ENCODE measurements at regions of chr1 and their contacts with region 1.

Region 1: DNA sequence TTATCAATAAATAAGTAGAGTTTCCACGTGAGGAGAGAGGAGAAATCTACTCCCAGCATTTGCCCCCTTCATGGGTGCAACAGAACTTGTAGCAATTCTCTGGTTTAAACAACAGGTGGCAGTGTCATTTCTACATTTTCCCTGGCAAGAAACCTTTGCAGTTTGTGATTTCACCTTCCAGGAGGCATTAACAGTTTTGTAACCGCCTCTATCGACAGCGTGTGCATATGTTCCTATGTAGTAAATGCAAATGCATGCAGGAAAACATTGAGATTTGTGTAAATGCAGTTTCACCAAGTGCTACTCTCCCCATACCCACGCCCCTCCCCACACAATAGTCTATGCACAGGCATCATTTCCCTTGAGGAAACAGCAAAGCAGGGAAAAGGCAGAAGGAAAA is 494.7 kb downstream of the SMYD3 start:
- DNase-seq: no peak

Region 2: GRCh38 chr1:245428681-245429080 is 583.7 kb before region 1 on chr1:
- intact Hi-C with region 1: no loop called
- DNase-seq: no peak

Region 3: DNA sequence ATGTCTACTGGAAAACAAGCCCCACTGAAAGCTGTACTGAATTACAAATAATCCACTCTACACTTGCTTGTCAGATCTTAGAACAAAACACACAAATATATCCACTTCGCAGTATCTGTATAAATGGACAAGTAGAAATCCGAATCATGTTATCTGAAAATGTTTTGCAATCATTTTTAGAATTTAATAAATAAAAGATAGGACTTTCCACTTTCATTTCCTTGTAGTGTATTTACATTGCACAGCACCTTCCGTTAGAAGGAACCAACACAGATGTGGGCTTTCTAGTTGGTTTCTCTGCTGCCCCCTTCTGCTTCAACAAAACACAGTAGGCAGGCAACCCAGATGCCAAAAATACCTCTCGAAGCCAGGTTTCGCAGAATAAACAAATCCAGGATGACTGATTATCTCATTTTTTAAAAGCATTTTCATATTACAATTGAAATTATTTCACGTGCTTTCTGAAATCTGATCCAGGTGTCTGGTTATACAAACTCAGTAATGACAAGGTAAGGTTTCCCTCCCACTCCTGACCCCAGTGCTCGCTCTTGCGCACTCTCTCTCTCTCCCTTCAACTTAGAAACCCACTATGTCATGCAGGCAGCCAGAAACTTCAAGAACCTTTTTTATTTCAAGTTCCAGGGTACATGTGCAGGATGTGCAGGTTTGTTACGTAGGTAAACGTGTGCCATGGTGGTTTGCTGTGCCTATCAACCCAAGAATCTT is 104.9 kb after region 1 on chr1:
- intact Hi-C with region 1: loop called (anchors 10 kb)
- DNase-seq: no peak

Region 4: DNA sequence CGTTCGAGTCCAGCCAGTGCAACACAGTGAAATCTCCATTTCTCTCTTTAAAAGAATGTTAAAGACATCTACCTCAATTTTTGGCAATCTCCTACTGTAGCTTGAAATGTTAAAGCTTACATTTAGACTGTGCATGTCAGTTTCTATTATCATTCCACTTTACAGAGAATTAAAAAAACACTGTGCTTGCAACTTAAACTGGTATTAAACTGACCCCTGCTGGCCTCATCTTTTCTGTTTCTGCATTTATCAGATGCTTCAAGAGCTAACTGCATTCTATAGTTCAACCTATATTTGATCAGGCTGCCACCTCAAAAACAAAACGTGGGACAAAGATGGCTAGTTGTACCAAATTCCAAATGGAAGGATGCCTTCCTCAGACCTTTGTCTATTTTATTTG is 268.2 kb after region 1 on chr1:
- intact Hi-C with region 1: loop called (anchors 5 kb)
- DNase-seq: no peak

Region 5: DNA sequence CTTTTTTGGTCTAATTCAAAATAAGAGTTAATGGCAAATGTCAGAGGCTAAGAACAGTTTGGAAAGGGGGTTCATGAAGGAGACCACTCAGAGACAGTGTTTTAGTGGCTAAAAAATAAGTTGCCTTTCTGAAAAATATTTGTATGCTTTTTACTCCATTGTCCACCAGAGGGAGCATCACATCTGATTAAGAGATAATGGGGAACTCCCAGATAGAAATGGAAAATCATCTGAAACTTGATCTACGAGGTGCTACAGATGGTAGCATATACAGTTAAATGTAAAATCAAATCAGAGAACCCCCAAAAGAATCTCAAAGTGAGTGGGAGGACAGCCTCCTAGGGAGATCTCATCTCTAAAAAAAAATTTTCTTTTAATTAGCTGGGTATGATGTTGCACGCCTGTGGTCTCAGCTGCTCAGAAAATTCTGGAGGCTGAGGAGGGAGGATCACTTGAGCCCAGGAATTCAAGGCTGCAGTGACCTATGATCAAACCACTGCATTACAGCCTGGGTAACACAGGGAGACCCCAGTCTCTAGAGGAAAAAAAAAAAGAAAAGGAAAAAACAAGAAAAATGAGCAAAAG is 485.1 kb after region 1 on chr1:
- intact Hi-C with region 1: loop called (anchors 5 kb)
- DNase-seq: no peak

Measured in cardiac septum (tissue), 1 donor.